Activated CD4-positive, alpha-beta T cell treated with anti-CD3 and anti-CD28 coated beads for 36 hours (primary cell): ENCODE measurements at regions of chr15 and their contacts with region 1.

Region 1: DNA sequence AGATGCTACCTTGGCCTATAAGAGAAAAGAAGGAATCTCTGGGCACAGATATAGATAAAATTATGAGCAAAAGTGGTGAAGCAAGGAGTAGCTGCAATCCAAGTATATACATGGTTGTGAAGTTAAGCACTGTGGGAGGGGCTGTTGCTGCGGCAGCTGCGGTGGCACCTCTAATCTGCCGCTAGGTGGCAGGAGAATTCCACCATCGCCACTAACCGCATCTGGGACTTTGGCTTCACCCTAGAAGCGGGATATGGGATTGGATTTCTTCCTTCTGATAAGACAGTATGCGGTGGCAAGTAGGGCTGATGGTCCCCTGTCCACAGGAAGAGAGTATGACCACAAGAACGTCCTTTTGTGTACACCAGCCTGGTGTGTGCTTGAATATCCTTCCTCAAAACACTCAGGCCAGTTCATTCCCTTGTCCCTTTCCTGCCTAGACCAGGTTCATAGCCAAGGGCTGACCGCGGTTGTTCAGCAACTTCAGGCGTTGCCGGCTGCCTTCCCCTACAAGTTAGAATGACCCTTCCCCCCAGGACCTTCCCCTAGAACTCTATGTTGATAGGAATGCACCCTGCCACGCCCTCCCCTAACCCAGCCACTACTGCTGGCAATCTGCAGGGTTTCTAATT is 5.1 kb downstream of the MAGEL2 start:
- DNase-seq: peak; percentile 70
- ATAC-seq: peak; percentile 53
- H3K4me3 Mint-ChIP-seq: no peak overlapping the region
- H3K27ac Mint-ChIP-seq: no peak overlapping the region
- H3K4me1 Mint-ChIP-seq: no peaks in the 10 kb centered on the region
- H3K27me3 Mint-ChIP-seq: peaks cover 2% of the 10 kb centered on the region

Region 2: DNA sequence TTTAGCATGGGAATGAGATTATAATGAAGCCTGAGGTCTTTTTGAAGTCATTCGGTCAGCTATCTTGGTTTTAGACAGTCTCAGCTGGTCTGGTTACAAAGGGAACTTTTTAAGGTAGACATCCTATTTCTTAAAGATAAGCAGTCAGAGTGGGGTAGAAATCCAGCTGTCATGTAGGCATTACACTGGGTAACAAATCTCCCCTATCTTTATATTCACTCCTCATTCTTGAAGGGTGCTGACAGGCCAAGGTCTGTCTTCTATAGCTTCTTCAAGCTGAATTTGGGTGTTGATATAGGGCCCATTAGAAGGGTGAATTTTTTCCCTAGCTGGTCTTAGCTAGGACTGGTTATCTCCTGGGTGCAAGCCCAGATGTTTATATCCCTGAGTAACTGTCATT is 65.8 kb after region 1 on chr15:
- CTCF ChIA-PET with region 1: no interaction called
- POLR2A ChIA-PET with region 1: no interaction called
- intact Hi-C with region 1: no loop called
- DNase-seq: no peak
- ATAC-seq: no peak
- H3K4me3 Mint-ChIP-seq: no peak overlapping the region
- H3K27ac Mint-ChIP-seq: no peak overlapping the region
- H3K4me1 Mint-ChIP-seq: no peaks in the 10 kb centered on the region
- H3K27me3 Mint-ChIP-seq: no peaks in the 10 kb centered on the region

Region 3: GRCh38 chr15:23857028-23857641 is 214.6 kb after region 1 on chr15:
- CTCF ChIA-PET with region 1: no interaction called
- POLR2A ChIA-PET with region 1: no interaction called
- intact Hi-C with region 1: loop called in 1 of 2 experiments (anchors 5 kb)
- DNase-seq: peak; percentile 42
- ATAC-seq: no peak
- H3K4me3 Mint-ChIP-seq: no peak overlapping the region
- H3K27ac Mint-ChIP-seq: no peak overlapping the region
- H3K4me1 Mint-ChIP-seq: no peaks in the 10 kb centered on the region
- H3K27me3 Mint-ChIP-seq: peaks cover 2% of the 10 kb centered on the region

Region 4: DNA sequence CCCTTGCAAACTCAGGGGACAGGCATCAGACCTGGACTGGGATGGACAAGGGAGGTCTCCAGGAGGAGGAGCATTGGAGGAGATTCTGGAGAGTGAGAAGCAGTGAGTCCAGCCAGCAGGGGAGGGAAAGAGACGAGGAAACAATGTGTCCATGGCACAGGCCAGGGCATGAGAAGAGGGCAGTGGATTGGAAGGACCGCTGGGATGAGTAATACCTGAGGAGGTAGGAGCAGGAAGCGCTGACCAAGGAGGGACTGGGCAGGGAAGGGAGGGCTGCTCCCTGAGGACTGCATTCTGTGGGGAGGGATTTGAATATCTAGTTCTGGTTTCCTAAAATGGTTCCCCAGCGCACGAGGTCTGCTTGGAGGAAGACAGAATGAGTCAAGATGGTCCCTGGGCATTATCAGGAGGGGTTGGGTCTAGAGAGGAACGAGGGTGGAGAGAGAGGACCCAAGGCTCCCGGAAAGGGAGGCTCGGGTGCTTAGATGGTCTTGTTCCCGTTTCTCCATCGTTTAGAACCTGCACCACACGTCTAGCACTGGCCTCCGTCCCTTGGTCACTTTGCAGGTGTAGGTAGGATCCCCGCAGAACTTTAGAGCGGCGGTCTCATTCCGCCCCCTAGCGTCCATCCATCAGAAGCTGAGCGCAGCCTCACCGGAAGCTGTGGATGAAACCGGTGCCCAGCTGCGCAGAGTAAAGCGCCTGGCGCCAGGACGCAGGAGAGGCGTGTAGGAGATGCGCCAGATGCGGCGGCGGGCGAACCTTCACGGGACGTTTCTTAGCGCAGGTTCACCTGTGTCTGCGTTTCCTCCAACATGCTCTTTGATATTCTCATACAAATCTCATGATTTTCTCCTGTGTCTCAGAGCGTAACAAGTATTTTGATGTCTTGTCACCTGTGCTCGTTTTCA is 235.2 kb after region 1 on chr15:
- CTCF ChIA-PET with region 1: interaction called, 3 read pairs
- POLR2A ChIA-PET with region 1: no interaction called
- intact Hi-C with region 1: loop called (anchors 1 to 5 kb)
- DNase-seq: peak; percentile 74
- ATAC-seq: no peak
- H3K4me3 Mint-ChIP-seq: no peak overlapping the region
- H3K27ac Mint-ChIP-seq: no peak overlapping the region
- H3K4me1 Mint-ChIP-seq: no peaks in the 10 kb centered on the region
- H3K27me3 Mint-ChIP-seq: no peaks in the 10 kb centered on the region